RWPE1 (cell line): ENCODE measurements at regions of chr3 and their contacts with region 1.

Region 1: DNA sequence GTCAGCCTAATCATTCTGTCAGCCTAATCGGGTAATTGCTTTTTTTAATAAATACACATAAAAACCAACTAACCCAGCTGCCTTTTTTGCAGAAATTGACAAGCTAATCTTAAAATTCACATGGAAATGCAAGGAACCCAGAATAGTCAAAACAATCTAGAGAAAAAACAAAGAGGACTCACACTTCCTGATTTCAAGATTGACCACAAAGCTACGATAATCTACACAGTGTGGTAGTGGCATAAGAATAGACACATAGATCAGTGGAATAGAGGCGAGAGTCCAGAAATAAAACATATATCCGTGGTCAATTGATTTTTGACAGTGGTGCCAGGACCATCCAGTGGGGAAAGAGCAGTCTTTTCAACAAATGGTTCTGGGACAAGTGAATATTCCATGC is 2.4 kb upstream of the C3orf20 start:
- DNase-seq: no peak
- H3K27ac ChIP-seq: no peak overlapping the region
- CTCF ChIP-seq: no peak

Region 2: GRCh38 chr3:14156201-14156600 is 516.4 kb before region 1 on chr3:
- CTCF ChIA-PET with region 1: no interaction called
- POLR2A ChIA-PET with region 1: interaction called, 11 read pairs
- DNase-seq: no peak
- H3K27ac ChIP-seq: peak overlapping the region; percentile 75
- CTCF ChIP-seq: no peak

Region 3: GRCh38 chr3:14691239-14691638 is 18.7 kb after region 1 on chr3:
- CTCF ChIA-PET with region 1: no interaction called
- POLR2A ChIA-PET with region 1: no interaction called
- DNase-seq: no peak
- H3K27ac ChIP-seq: no peak overlapping the region
- CTCF ChIP-seq: no peak

Region 4: DNA sequence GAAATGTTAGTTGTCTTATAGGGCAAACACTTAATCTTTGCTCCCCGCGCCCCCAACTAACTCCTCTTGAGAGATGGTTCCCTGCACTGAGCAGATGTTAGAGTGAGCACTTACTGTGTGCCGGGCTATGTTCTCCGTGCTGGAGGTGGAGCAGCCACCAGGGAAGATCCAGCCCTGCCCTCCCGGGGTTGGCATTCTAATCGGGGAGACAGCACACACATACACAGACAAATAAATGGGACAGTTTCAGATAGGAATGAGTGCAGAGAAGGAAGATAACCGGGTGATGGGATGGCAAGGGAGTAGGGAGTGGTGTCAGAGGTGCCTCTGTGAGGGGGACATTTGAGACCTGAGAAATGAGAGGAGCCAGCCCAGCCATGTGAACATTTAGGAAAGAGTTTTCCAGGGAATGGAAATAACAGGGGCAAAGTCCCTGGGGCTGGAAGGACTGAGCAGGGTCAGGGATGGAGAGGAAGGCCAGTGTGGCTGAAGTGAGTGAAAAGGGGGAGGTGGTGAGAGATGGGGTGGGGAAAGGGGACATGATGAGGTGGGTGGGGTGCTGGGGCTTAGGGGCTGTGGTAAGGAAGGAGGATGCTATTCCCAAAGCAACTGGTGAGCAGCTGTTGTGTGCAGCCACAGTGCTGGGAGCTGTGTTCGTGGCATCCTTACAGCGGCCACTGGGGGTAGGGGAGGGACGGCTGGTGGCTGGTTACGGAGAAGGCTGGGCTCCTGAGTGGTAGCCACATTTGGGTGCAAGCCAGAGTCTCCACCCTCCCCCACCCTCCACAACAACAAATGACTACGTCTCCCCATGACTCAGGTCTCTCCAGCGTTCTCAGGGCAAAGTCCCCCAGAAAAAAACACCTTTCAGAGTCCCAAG is 130.8 kb after region 1 on chr3:
- CTCF ChIA-PET with region 1: no interaction called
- POLR2A ChIA-PET with region 1: no interaction called
- DNase-seq: no peak
- H3K27ac ChIP-seq: no peak overlapping the region
- CTCF ChIP-seq: no peak